ENCODE measurements at regions of chr2 and their contacts with region 1.

Region 1: GRCh38 chr2:43194121-43194869 is 32.1 kb downstream of the ZFP36L2 start:
- DNase-seq: no peak
- H3K4me3 Mint-ChIP-seq: peak overlapping the region; percentile 84
- H3K27ac Mint-ChIP-seq: peak overlapping the region; percentile 93
- H3K4me1 Mint-ChIP-seq: peaks cover 49% of the 10 kb centered on the region
- H3K27me3 Mint-ChIP-seq: no peaks in the 10 kb centered on the region

Region 2: GRCh38 chr2:43139996-43140621 is 54.2 kb before region 1 on chr2:
- intact Hi-C with region 1: loop called (anchors 1 kb)
- DNase-seq: peak; percentile 83
- H3K4me3 Mint-ChIP-seq: peak overlapping the region; percentile 62
- H3K27ac Mint-ChIP-seq: peak overlapping the region; percentile 85
- H3K4me1 Mint-ChIP-seq: peaks cover 63% of the 10 kb centered on the region
- H3K27me3 Mint-ChIP-seq: no peaks in the 10 kb centered on the region

Region 3: GRCh38 chr2:43158259-43158880 is 35.9 kb before region 1 on chr2:
- intact Hi-C with region 1: loop called (anchors 1 kb)
- DNase-seq: peak; percentile 89
- H3K4me3 Mint-ChIP-seq: peak overlapping the region; percentile 78
- H3K27ac Mint-ChIP-seq: peak overlapping the region; percentile 98
- H3K4me1 Mint-ChIP-seq: peaks cover 56% of the 10 kb centered on the region
- H3K27me3 Mint-ChIP-seq: no peaks in the 10 kb centered on the region

Region 4: GRCh38 chr2:43219383-43220228 is 25.3 kb after region 1 on chr2:
- intact Hi-C with region 1: loop called (anchors 1 kb)
- DNase-seq: peak; percentile 95
- H3K4me3 Mint-ChIP-seq: peak overlapping the region; percentile 84
- H3K27ac Mint-ChIP-seq: peak overlapping the region; percentile 96
- H3K4me1 Mint-ChIP-seq: peaks cover 48% of the 10 kb centered on the region
- H3K27me3 Mint-ChIP-seq: peaks cover 2% of the 10 kb centered on the region

Region 5: GRCh38 chr2:43269074-43269572 is 74.8 kb after region 1 on chr2:
- intact Hi-C with region 1: no loop called
- DNase-seq: no peak
- H3K4me3 Mint-ChIP-seq: no peak overlapping the region
- H3K27ac Mint-ChIP-seq: peak overlapping the region; percentile 30
- H3K4me1 Mint-ChIP-seq: peaks cover 19% of the 10 kb centered on the region
- H3K27me3 Mint-ChIP-seq: no peaks in the 10 kb centered on the region

Measured in activated CD4-positive, alpha-beta T cell treated with anti-CD3 and anti-CD28 coated beads, Interleukin-2, amount 10 ng/mL, durations not matched to agents 24 days and 14 days (primary cell).